Endothelial cell of umbilical vein (primary cell): ENCODE measurements at regions of chr1 and their contacts with region 1.

Region 1: DNA sequence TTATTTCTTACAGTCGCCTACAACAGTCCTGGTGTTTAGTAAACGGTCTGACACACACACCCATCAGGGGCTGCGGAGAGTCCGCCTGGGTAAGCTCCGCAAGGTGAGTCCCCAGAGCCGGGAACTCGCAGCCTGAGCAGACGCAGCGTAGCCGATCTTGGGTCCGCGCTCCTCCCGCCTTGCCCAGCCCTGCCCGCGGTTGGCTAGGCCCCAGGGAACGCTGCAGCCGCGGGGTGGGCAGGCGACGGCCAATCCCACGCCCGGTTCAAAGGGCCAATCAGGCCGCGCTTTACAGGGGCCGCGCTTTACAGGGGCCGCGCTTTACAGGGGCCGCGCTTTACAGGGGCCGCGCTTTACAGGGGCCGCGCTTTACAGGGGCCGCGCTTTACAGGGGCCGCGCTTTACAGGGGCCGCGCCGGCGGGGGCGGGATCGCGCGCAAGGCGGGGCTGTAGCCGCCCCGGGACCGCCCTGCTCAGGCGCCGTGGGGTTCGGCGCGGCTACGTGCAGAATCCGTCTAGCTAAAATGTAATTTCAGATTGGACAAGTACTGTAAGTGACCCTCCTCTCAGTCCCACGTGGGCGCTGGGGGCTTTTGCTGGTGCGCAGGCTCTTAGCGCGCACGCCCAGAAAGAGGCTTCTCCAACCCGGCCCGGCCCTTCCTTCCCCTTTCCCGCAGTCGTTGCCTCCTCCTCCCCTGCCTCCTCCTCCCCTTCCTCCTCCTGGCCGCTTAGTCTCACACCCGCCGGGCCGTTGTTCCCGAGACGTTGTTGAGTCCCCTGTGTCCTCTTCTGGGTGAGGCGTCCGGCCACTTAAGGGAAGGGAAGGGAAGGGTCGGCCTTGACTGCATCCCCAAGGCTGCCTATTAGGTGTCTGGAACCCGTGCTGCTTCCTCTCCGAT is at the start of gene FGGY:
- DNase-seq: peak; percentile 99
- H3K4me3 ChIP-seq: peak within 1 kb of the TSS; percentile 36 to 81 (median 64)
- H3K27ac ChIP-seq: peak within 1 kb of the TSS; percentile 92
- H3K4me1 ChIP-seq: peaks cover 30% of the 10 kb centered on the region
- H3K27me3 ChIP-seq: no peaks in the 10 kb centered on the region
- CTCF ChIP-seq: no peak
- POLR2A ChIP-seq: peak; percentile 95
- total RNA-seq, gene FGGY: 5.6 and 8.3 TPM in 2 replicates

Region 2: GRCh38 chr1:59013276-59013927 is 283.2 kb before region 1 on chr1:
- CTCF ChIA-PET with region 1: no interaction called
- POLR2A ChIA-PET with region 1: no interaction called
- dilution Hi-C with region 1: no loop called
- intact Hi-C with region 1: loop called (anchors 5 kb)
- DNase-seq: peak; percentile 76
- H3K4me3 ChIP-seq: peak overlapping the region in 1 of 3 experiments; percentile 9
- H3K27ac ChIP-seq: peak overlapping the region; percentile 59
- H3K4me1 ChIP-seq: peaks cover 19% of the 10 kb centered on the region
- H3K27me3 ChIP-seq: no peaks in the 10 kb centered on the region
- CTCF ChIP-seq: no peak
- POLR2A ChIP-seq: no peak

Region 3: GRCh38 chr1:59076612-59077011 is 220.0 kb before region 1 on chr1:
- CTCF ChIA-PET with region 1: interaction called, 4 read pairs
- POLR2A ChIA-PET with region 1: no interaction called
- dilution Hi-C with region 1: no loop called
- intact Hi-C with region 1: loop called (anchors 2 kb)
- DNase-seq: peak; percentile 60
- H3K4me3 ChIP-seq: no peak overlapping the region
- H3K27ac ChIP-seq: no peak overlapping the region
- H3K4me1 ChIP-seq: peaks cover 13% of the 10 kb centered on the region
- H3K27me3 ChIP-seq: no peaks in the 10 kb centered on the region
- CTCF ChIP-seq: peak in 1 of 2 donors; percentile 16
- POLR2A ChIP-seq: no peak

Region 4: GRCh38 chr1:59128784-59129227 is 167.8 kb before region 1 on chr1:
- CTCF ChIA-PET with region 1: no interaction called
- POLR2A ChIA-PET with region 1: no interaction called
- dilution Hi-C with region 1: no loop called
- intact Hi-C with region 1: loop called (anchors 5 kb)
- DNase-seq: peak; percentile 77
- H3K4me3 ChIP-seq: no peak overlapping the region
- H3K27ac ChIP-seq: peak overlapping the region; percentile 87
- H3K4me1 ChIP-seq: peaks cover 32% of the 10 kb centered on the region
- H3K27me3 ChIP-seq: no peaks in the 10 kb centered on the region
- CTCF ChIP-seq: no peak
- POLR2A ChIP-seq: peak; percentile 33

Region 5: GRCh38 chr1:59150577-59151391 is 145.8 kb before region 1 on chr1:
- CTCF ChIA-PET with region 1: no interaction called
- POLR2A ChIA-PET with region 1: no interaction called
- dilution Hi-C with region 1: no loop called
- intact Hi-C with region 1: loop called (anchors 2 kb)
- DNase-seq: peak; percentile 89
- H3K4me3 ChIP-seq: no peak overlapping the region
- H3K27ac ChIP-seq: peak overlapping the region; percentile 60
- H3K4me1 ChIP-seq: peaks cover 33% of the 10 kb centered on the region
- H3K27me3 ChIP-seq: no peaks in the 10 kb centered on the region
- CTCF ChIP-seq: no peak
- POLR2A ChIP-seq: no peak

Region 6: DNA sequence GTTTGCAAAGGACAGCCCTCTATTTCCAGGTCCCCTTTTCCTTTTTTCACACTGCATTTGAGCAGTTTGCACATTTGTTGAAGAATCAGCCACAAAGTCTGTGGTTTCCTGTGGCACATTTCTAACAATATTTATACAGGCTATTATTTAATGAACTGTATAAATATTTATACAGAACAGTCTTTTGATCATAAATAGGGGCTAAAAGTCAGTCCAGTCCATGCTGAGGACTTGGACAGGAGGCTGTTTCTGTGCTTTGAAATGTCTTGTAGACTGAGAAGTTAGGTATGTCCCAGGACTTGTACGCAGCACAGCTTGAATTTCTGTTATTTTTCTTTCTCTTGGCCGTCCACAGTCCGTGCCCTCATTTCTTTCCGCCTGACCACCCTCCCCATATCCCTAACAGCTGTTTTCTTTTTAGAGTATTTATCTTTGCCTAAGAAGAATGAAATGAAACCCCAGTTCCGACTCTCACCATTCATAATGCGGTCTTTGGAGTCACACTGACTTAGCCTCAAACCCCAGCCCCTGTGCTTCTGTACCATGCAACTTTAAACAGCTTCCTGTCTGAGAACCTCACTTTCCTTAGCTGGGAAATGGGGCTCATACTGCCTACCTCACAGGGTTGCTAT is 20.0 kb after region 1 on chr1:
- CTCF ChIA-PET with region 1: no interaction called
- POLR2A ChIA-PET with region 1: no interaction called
- dilution Hi-C with region 1: no loop called
- intact Hi-C with region 1: no loop called
- DNase-seq: peak; percentile 72
- H3K4me3 ChIP-seq: peak overlapping the region in 1 of 3 experiments; percentile 37
- H3K27ac ChIP-seq: no peak overlapping the region
- H3K4me1 ChIP-seq: peaks cover 15% of the 10 kb centered on the region
- H3K27me3 ChIP-seq: no peaks in the 10 kb centered on the region
- CTCF ChIP-seq: no peak
- POLR2A ChIP-seq: no peak

Region 7: GRCh38 chr1:59596441-59596861 is 299.8 kb after region 1 on chr1:
- CTCF ChIA-PET with region 1: no interaction called
- POLR2A ChIA-PET with region 1: no interaction called
- dilution Hi-C with region 1: no loop called
- intact Hi-C with region 1: loop called (anchors 1 kb)
- DNase-seq: peak; percentile 98
- H3K4me3 ChIP-seq: no peak overlapping the region
- H3K27ac ChIP-seq: peak overlapping the region; percentile 83
- H3K4me1 ChIP-seq: peaks cover 29% of the 10 kb centered on the region
- H3K27me3 ChIP-seq: no peaks in the 10 kb centered on the region
- CTCF ChIP-seq: no peak
- POLR2A ChIP-seq: no peak